Activated CD4-positive, alpha-beta T cell treated with anti-CD3 and anti-CD28 coated beads for 36 hours (primary cell): ENCODE measurements at regions of chr2 and their contacts with region 1.

Region 1: DNA sequence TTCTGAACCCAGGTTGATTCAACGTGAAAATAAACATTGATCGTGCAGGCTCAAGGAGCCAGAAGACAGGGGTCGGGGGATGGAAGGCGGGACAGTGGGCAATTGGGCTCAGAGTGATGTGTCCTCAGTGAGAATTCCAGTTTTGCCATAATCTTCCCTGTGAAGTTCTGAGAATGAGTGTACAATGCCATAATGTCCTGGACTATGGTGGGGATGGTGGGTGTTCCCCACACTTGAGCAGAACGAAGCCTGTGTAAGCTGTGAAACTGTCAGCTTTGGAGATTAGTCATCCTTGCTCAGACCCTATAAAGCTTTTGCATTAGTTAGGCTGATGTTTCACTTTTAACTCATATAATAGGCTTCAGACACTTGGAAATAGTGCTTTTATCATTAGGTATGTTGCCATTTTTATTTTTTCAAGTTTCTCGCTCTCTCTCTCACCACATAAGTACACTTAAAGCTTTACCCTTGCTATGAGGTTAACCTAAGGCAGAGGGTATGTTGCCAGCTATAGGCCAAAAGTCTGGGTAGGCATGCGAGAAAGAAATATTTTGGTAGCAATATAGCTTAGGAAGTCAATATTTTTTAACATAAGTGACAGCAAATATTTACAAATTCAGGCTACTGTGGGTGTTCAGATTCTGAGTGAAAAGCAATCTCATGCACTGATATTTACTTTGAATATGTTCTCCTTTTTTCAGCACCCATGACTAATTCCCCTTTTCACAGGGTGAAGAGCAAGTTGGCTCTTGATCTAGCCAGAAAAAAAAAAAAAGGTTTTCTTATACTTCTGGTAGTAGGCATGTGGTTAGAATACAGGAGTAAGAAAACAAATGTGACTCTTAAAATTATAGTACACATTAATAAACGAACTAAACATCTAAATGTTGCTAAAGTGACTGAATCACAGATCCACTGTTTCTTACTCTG is 47.2 kb downstream of the CDC42EP3 start:
- DNase-seq: peak; percentile 45
- ATAC-seq: peak; percentile 78
- H3K4me3 Mint-ChIP-seq: peak overlapping the region; percentile 48
- H3K27ac Mint-ChIP-seq: peak overlapping the region; percentile 85
- H3K4me1 Mint-ChIP-seq: peaks cover 76% of the 10 kb centered on the region
- H3K27me3 Mint-ChIP-seq: no peaks in the 10 kb centered on the region

Region 2: DNA sequence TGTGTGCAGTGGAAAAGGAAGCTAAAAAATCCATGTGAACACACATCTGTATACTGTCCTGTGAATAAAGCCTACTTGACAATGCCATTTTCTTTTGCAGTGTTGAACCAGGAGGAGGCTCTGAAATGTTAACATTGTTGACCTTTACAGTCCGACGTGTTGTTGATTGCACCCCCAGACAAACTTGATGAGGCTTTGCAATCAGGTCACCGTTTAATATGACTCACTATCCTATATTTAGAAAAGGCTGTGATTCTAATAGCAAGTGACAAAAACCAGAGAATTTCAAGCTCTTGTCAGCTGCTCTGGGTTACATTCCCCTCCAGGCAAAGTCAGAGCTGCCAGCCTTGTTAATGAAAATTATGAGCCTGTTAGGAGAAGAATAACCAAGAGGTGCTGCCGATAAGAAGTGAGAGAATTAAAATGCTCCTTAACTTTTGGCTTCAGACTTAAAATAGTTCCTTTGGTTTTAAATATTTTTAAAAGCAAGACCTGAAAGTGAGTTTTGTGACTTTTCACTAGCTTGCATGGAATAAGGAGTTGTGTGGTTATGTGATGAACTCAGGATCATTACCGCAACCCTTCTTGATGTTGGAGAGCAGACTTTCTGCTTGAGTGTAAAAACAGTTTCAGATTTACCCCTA is 117.7 kb before region 1 on chr2:
- CTCF ChIA-PET with region 1: no interaction called
- POLR2A ChIA-PET with region 1: no interaction called
- intact Hi-C with region 1: no loop called
- DNase-seq: no peak
- ATAC-seq: no peak
- H3K4me3 Mint-ChIP-seq: no peak overlapping the region
- H3K27ac Mint-ChIP-seq: no peak overlapping the region
- H3K4me1 Mint-ChIP-seq: no peaks in the 10 kb centered on the region
- H3K27me3 Mint-ChIP-seq: peaks cover 7% of the 10 kb centered on the region

Region 3: GRCh38 chr2:37570773-37571586 is 53.3 kb before region 1 on chr2:
- CTCF ChIA-PET with region 1: interaction called, 4 read pairs
- POLR2A ChIA-PET with region 1: no interaction called
- intact Hi-C with region 1: loop called in 1 of 2 experiments (anchors 2 kb)
- DNase-seq: peak; percentile 83
- ATAC-seq: peak; percentile 92
- H3K4me3 Mint-ChIP-seq: no peak overlapping the region
- H3K27ac Mint-ChIP-seq: no peak overlapping the region
- H3K4me1 Mint-ChIP-seq: peaks cover 31% of the 10 kb centered on the region
- H3K27me3 Mint-ChIP-seq: no peaks in the 10 kb centered on the region

Region 4: DNA sequence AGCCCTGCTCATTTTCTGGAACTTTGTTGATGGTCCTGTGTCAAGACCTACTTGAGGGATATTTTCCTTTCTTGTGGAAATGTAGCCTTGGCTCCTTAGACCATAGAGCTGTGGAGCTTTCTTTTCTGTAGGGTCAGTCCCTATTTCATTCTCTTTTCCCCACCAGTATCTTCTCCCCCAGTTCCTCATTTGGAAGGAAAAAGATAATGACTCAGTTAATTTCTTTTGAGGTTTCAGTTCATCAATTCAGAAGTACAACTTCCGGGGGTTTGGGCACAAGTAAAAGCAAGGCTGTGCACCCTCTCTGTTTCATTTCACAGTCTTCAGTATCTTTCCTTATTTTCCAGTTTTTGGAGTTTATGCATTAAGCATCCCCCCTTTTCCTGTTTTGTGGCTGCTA is 23.5 kb before region 1 on chr2:
- CTCF ChIA-PET with region 1: interaction called, 6 read pairs
- POLR2A ChIA-PET with region 1: no interaction called
- intact Hi-C with region 1: loop called in 1 of 2 experiments (anchors 1 kb)
- DNase-seq: peak; percentile 16
- ATAC-seq: peak; percentile 76
- H3K4me3 Mint-ChIP-seq: peak overlapping the region; percentile 58
- H3K27ac Mint-ChIP-seq: peak overlapping the region; percentile 5
- H3K4me1 Mint-ChIP-seq: peaks cover 47% of the 10 kb centered on the region
- H3K27me3 Mint-ChIP-seq: no peaks in the 10 kb centered on the region

Region 5: DNA sequence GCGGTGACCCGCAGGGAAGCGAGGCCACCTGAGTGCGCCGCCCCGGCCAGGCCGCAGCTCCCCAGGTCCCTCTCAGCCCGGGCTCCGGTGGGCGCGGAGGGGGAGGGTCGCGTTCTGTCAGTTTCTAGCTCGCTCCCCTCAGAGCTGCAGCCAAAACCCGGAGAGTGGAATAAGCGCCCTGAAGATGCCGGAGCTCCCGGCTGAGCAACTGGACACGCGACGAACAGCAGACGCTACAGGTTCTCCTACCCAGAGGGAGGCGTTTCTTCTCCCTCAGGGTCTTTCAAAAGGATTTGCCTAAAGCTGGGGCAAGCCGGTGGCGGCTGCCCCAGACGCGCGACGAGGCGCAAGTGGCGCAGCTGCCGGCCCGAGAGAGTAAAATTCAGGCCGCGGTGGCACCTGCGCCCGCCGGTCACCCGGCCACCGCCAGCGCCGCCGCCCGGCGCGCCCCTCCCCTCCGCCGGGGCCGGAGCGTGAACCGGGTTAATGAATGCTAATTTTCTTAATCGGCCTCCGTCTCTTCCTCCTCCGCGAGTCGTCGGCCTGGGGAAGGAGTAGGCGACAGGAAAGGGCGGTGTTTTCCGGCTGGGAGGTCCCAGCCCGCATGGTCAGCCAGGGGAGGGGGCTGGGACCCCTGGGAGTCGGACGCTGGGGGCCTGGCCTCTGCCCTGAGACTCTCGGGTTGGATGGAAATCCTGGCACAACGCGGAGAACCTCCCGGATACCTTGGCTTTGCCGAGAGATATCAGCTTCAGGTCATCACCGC is 48.1 kb after region 1 on chr2:
- CTCF ChIA-PET with region 1: no interaction called
- POLR2A ChIA-PET with region 1: no interaction called
- intact Hi-C with region 1: loop called in 1 of 2 experiments (anchors 1 kb)
- DNase-seq: peak; percentile 80
- ATAC-seq: peak; percentile 34
- H3K4me3 Mint-ChIP-seq: peak overlapping the region; percentile 83
- H3K27ac Mint-ChIP-seq: peak overlapping the region; percentile 83
- H3K4me1 Mint-ChIP-seq: peaks cover 40% of the 10 kb centered on the region
- H3K27me3 Mint-ChIP-seq: no peaks in the 10 kb centered on the region

Region 6: DNA sequence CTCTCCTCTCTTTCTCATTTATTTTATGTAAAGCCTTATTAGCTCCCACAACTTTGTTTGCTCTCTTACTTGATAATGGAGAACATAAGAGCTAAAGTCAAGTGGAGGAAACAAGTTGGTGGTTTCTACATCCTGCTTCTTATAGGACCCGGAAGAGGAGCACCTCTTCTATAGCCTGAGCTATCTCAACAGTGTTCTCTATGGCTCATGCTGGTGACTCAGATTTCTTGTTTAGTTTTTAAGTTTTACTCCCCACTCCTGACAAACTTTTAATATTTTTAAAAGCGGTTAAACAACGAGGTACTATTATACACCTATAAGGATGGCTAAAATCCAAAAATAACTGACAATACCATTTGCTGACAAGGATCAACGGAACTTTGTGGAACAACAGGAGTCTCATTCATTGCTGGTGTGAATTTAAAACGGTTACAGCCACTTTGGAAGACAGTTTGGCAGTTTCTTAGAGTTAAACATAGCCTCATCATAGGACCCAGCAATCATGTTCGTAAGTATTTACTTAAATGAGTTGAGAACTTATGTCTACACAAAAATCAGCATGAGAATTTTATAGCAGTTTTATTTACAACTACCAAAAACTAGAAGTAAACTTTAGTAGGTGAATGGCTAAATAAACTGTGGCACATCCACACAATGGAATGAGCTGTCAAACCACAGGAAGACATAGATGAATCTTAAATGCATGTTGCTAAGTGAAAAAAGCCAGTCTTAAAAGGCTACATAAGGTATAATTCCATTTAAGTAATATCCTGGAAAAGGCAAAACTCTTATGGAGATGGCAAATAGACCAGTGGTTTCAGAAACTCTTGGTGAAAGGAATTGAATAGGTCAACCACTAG is 59.9 kb after region 1 on chr2:
- CTCF ChIA-PET with region 1: interaction called, 3 read pairs
- POLR2A ChIA-PET with region 1: no interaction called
- intact Hi-C with region 1: loop called in 1 of 2 experiments (anchors 1 kb)
- DNase-seq: no peak
- ATAC-seq: peak; percentile 95
- H3K4me3 Mint-ChIP-seq: peak overlapping the region; percentile 32
- H3K27ac Mint-ChIP-seq: peak overlapping the region; percentile 95
- H3K4me1 Mint-ChIP-seq: peaks cover 48% of the 10 kb centered on the region
- H3K27me3 Mint-ChIP-seq: no peaks in the 10 kb centered on the region

Region 7: GRCh38 chr2:37695336-37695735 is 71.1 kb after region 1 on chr2:
- CTCF ChIA-PET with region 1: no interaction called
- POLR2A ChIA-PET with region 1: no interaction called
- intact Hi-C with region 1: no loop called
- DNase-seq: no peak
- ATAC-seq: no peak
- H3K4me3 Mint-ChIP-seq: no peak overlapping the region
- H3K27ac Mint-ChIP-seq: no peak overlapping the region
- H3K4me1 Mint-ChIP-seq: no peaks in the 10 kb centered on the region
- H3K27me3 Mint-ChIP-seq: no peaks in the 10 kb centered on the region

Region 8: GRCh38 chr2:38064801-38065501 is 440.7 kb after region 1 on chr2:
- CTCF ChIA-PET with region 1: no interaction called
- POLR2A ChIA-PET with region 1: no interaction called
- intact Hi-C with region 1: no loop called
- DNase-seq: no peak
- ATAC-seq: no peak
- H3K4me3 Mint-ChIP-seq: no peak overlapping the region
- H3K27ac Mint-ChIP-seq: no peak overlapping the region
- H3K4me1 Mint-ChIP-seq: no peaks in the 10 kb centered on the region
- H3K27me3 Mint-ChIP-seq: peaks cover 10% of the 10 kb centered on the region